CD8-positive, alpha-beta T cell (primary cell): ENCODE measurements at regions of chr9 and their contacts with region 1.

Region 1: GRCh38 chr9:128927731-128928411 is 7.1 kb downstream of the PHYHD1 start:
- DNase-seq: peak; percentile 21 to 77 (median 60)
- ATAC-seq: peak; percentile 74
- H3K4me3 ChIP-seq: no peak overlapping the region
- H3K4me3 Mint-ChIP-seq: no peak overlapping the region
- H3K27ac ChIP-seq: no peak overlapping the region
- H3K27ac Mint-ChIP-seq: no peak overlapping the region
- H3K4me1 ChIP-seq: peaks cover 5% of the 10 kb centered on the region
- H3K4me1 Mint-ChIP-seq: peaks cover 8% of the 10 kb centered on the region
- H3K27me3 ChIP-seq: no peaks in the 10 kb centered on the region
- H3K27me3 Mint-ChIP-seq: no peaks in the 10 kb centered on the region
- CTCF ChIP-seq: peak; percentile 97

Region 2: DNA sequence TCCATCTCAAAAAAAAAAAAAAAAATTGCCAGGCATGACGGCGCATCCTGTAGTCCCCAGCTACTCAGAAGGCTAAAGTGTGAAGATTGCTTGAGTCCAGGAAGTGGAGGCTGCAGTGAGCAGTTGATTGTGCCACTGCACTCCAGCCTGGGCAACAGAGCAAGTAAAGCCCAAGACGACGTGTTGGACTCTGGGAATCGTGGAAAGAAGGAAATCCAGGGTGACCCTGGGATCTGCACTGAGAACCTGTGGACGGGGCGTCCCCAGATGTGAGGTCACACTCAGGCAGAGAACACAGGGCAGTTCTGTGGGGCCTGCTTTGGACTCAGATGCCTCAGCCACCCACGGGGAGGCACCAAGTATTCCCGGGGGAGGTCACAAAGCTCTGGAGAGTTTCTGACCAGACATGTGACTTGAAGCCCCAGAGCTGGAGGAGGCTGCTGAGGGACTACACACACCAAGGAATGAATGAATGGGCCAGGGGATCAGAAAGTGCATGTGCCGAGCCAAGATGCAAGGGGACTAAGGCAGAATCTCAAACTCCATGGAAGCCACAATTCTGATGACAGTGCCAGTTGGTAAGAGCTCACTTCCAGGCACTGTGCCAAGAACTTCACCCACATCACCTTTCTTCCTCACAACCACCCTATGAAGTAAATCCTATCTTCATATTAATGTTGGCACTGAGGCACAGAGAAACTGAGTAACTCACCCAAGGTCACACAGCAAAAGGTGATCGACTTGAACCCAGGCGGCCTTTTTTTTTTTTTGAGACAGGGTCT is 284.2 kb before region 1 on chr9:
- CTCF ChIA-PET with region 1: interaction called, 12 read pairs
- POLR2A ChIA-PET with region 1: no interaction called
- intact Hi-C with region 1: loop called (anchors 1 kb)
- DNase-seq: no peak
- ATAC-seq: no peak
- H3K4me3 ChIP-seq: no peak overlapping the region
- H3K4me3 Mint-ChIP-seq: no peak overlapping the region
- H3K27ac ChIP-seq: no peak overlapping the region
- H3K27ac Mint-ChIP-seq: no peak overlapping the region
- H3K4me1 ChIP-seq: no peaks in the 10 kb centered on the region
- H3K4me1 Mint-ChIP-seq: no peaks in the 10 kb centered on the region
- H3K27me3 ChIP-seq: no peaks in the 10 kb centered on the region
- H3K27me3 Mint-ChIP-seq: no peaks in the 10 kb centered on the region
- CTCF ChIP-seq: no peak

Region 3: GRCh38 chr9:128863647-128864046 is 64.2 kb before region 1 on chr9:
- CTCF ChIA-PET with region 1: interaction called, 299 read pairs
- POLR2A ChIA-PET with region 1: interaction called, 7 read pairs
- intact Hi-C with region 1: loop called in 1 of 2 experiments (anchors 1 kb)
- DNase-seq: peak; percentile 74 to 95 (median 86)
- ATAC-seq: peak; percentile 99
- H3K4me3 ChIP-seq: no peak overlapping the region
- H3K4me3 Mint-ChIP-seq: no peak overlapping the region
- H3K27ac ChIP-seq: no peak overlapping the region
- H3K27ac Mint-ChIP-seq: no peak overlapping the region
- H3K4me1 ChIP-seq: peaks cover 5% of the 10 kb centered on the region
- H3K4me1 Mint-ChIP-seq: peaks cover 5% of the 10 kb centered on the region
- H3K27me3 ChIP-seq: no peaks in the 10 kb centered on the region
- H3K27me3 Mint-ChIP-seq: no peaks in the 10 kb centered on the region
- CTCF ChIP-seq: peak; percentile 77

Region 4: GRCh38 chr9:128875790-128876160 is 52.1 kb before region 1 on chr9:
- CTCF ChIA-PET with region 1: interaction called, 47 read pairs
- POLR2A ChIA-PET with region 1: interaction called, 3 read pairs
- intact Hi-C with region 1: no loop called
- DNase-seq: no peak
- ATAC-seq: no peak
- H3K4me3 ChIP-seq: no peak overlapping the region
- H3K4me3 Mint-ChIP-seq: no peak overlapping the region
- H3K27ac ChIP-seq: no peak overlapping the region
- H3K27ac Mint-ChIP-seq: no peak overlapping the region
- H3K4me1 ChIP-seq: peaks cover 4% of the 10 kb centered on the region
- H3K4me1 Mint-ChIP-seq: peaks cover 16% of the 10 kb centered on the region
- H3K27me3 ChIP-seq: no peaks in the 10 kb centered on the region
- H3K27me3 Mint-ChIP-seq: no peaks in the 10 kb centered on the region
- CTCF ChIP-seq: no peak

Region 5: GRCh38 chr9:128917151-128917849 is 10.6 kb before region 1 on chr9:
- CTCF ChIA-PET with region 1: interaction called, 39 read pairs
- POLR2A ChIA-PET with region 1: no interaction called
- intact Hi-C with region 1: no loop called
- DNase-seq: no peak
- ATAC-seq: no peak
- H3K4me3 ChIP-seq: no peak overlapping the region
- H3K4me3 Mint-ChIP-seq: no peak overlapping the region
- H3K27ac ChIP-seq: no peak overlapping the region
- H3K27ac Mint-ChIP-seq: peak overlapping the region; percentile 3
- H3K4me1 ChIP-seq: peaks cover 29% of the 10 kb centered on the region
- H3K4me1 Mint-ChIP-seq: peaks cover 18% of the 10 kb centered on the region
- H3K27me3 ChIP-seq: no peaks in the 10 kb centered on the region
- H3K27me3 Mint-ChIP-seq: no peaks in the 10 kb centered on the region
- CTCF ChIP-seq: no peak